SK-N-SH (cell line): ENCODE measurements at regions of chr11 and their contacts with region 1.

Region 1: GRCh38 chr11:123261345-123262106 is 66.5 kb upstream of the CLMP start:
- DNase-seq: peak; percentile 85
- H3K4me3 ChIP-seq: peak overlapping the region in 1 of 2 experiments; percentile 24; a peak in 2 of 4 replicates
- H3K27ac ChIP-seq: no peak overlapping the region
- H3K4me1 ChIP-seq: peaks cover 6 to 18% of the 10 kb centered on the region in 2 experiments; a peak in 2 of 4 replicates
- H3K27me3 ChIP-seq: no peaks in the 10 kb centered on the region
- CTCF ChIP-seq: peak; percentile 96
- EP300 ChIP-seq: no peak
- RAD21 ChIP-seq: peak; percentile 84

Region 2: DNA sequence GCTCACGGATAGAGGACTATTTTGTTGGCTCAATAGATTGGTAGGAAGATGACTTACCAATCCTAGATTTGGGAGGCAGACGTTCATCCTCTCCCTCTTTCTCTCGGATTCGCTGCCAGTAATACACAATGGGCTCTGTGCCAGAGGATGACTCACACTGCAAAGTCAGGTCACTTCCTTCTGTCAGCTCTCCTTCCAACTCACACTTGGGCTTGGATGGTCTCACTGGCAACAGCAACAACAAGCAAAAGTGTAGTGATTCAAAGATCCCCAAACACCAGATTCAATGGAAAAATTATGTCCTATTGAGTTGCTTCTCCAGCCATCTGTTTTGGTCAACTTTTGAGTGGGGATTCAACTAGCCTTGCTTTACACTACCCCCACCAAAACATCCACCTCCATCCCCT is 177.9 kb before region 1 on chr11:
- CTCF ChIA-PET with region 1: interaction called, 10 read pairs
- POLR2A ChIA-PET with region 1: no interaction called
- DNase-seq: peak; percentile 43
- H3K4me3 ChIP-seq: no peak overlapping the region
- H3K27ac ChIP-seq: peak overlapping the region; percentile 44 to 97
- H3K4me1 ChIP-seq: peaks cover 0 to 17% of the 10 kb centered on the region in 2 experiments
- H3K27me3 ChIP-seq: no peaks in the 10 kb centered on the region
- CTCF ChIP-seq: no peak
- EP300 ChIP-seq: peak in 1 of 2 experiments; percentile 40; a peak in 1 of 4 replicates
- RAD21 ChIP-seq: no peak

Region 3: DNA sequence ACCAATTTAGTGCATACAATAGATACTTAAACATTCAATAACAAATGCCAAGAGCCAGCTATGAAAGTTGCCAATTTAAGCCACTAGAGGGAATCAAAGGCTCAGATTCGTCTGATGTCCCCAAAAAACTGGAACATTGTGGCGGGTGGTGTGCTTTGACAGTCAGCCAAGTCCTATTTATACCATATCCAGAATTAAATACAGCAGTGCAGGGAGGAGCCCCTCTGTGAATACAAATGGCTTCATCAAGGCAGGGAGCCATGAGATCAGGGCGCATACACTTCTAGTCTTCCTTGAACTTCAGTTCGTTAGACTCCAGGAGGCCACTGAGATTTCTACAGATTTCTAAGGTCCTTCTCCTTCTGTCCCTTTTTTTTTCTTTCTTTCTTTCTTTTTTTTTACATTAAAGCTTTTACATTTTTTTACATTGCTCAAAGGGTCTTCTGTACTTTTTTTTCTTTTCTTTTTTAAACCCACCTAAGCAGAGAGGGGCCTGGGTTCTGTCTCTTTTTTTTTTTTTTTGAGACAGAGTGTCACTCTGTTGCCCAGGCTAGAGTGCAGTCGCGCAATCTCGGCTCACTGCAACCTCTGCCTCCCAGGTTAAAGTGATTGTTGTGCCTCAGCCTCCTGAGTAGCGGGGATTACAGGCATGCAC is 158.1 kb before region 1 on chr11:
- CTCF ChIA-PET with region 1: interaction called, 102 read pairs
- POLR2A ChIA-PET with region 1: interaction called, 7 read pairs
- DNase-seq: peak; percentile 76
- H3K4me3 ChIP-seq: peak overlapping the region in 1 of 2 experiments; percentile 31; a peak in 1 of 4 replicates
- H3K27ac ChIP-seq: peak overlapping the region; percentile 31 to 53; a peak in 3 of 4 replicates
- H3K4me1 ChIP-seq: peaks cover 8 to 16% of the 10 kb centered on the region in 2 experiments; a peak in 2 of 4 replicates
- H3K27me3 ChIP-seq: no peaks in the 10 kb centered on the region
- CTCF ChIP-seq: peak; percentile 81
- EP300 ChIP-seq: no peak
- RAD21 ChIP-seq: peak; percentile 90

Region 4: DNA sequence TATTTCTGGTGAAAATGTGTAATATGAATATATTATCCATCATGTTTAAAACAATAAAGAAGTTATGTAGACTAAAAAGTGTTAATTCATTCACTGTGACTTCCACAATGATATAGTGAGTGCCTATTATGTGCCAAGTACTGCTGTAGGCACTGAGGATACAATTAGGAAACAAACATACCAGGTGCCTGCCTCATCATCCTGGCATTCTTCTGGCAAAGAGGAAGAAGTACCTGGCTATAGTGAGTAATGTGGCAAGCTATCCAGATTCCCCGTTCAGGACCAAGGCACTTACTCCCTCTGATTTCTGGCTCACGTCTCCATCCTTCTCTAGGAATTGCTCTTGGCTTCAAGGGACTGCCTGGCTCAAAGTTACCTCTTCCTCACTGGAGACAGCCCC is 11.0 kb after region 1 on chr11:
- CTCF ChIA-PET with region 1: interaction called, 32 read pairs
- POLR2A ChIA-PET with region 1: no interaction called
- DNase-seq: no peak
- H3K4me3 ChIP-seq: no peak overlapping the region
- H3K27ac ChIP-seq: no peak overlapping the region
- H3K4me1 ChIP-seq: no peaks in the 10 kb centered on the region; a peak in 1 of 4 replicates
- H3K27me3 ChIP-seq: no peaks in the 10 kb centered on the region
- CTCF ChIP-seq: no peak
- EP300 ChIP-seq: no peak
- RAD21 ChIP-seq: no peak